ENCODE measurements at regions of chr17 and their contacts with region 1.

Region 1: DNA sequence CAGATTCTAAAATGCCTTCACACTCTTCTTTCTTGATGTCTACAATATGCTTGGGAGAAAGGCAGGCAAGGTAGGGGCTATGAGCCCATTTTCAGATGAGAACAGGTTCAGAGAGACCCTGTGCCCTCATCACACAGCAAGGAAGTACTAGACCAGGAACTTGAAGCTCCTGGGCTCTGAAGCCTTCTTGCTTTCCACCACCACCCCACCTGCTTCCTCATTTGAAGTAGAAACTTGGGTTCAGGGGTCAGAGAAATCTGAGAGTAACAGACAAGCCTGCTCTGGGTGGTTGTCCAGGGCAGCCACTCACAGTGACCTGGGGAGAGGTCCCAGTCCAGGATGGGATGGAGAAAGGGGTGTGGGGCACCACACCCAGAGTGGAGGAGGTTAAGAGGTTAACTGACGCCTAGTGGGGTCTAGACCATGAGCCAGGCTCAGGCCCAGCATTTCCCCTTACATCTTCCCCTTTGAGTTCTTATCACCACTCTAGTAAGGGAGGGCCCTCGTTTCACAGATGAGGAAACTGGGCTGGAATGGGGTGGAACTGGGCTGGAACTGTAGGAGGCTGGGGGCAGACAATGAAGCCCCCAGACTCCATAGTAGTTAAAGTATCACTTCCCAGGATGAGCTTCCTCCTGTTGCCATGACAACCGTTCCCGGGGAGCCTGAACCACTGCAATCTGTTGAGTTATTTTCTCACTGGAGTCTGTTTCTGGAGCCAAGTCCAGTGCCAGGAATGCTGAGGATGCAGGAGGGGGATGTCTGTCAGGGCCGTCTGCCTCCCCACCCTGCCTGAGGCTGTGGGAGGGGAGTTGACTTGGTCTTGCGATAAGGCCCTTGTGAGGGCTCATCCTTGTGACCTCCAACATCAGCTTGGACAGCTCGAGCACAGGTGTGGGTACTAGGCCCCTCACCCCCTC is 16.2 kb upstream of the PHF12 start:
- DNase-seq: peak; percentile 44 to 56
- ATAC-seq: no peak
- H3K4me3 ChIP-seq: no peak overlapping the region
- H3K27ac ChIP-seq: no peak overlapping the region
- H3K4me1 ChIP-seq: no peaks in the 10 kb centered on the region
- H3K27me3 ChIP-seq: no peaks in the 10 kb centered on the region

Region 2: GRCh38 chr17:29111816-29112499 is 144.5 kb after region 1 on chr17:
- intact Hi-C with region 1: loop called (anchors 2 kb)
- DNase-seq: peak; percentile 76 to 88
- ATAC-seq: peak; percentile 75
- H3K4me3 ChIP-seq: no peak overlapping the region
- H3K27ac ChIP-seq: no peak overlapping the region
- H3K4me1 ChIP-seq: no peaks in the 10 kb centered on the region
- H3K27me3 ChIP-seq: no peaks in the 10 kb centered on the region

Measured in aorta (tissue), 5 donors.